SK-N-SH (cell line): ENCODE measurements at regions of chr13 and their contacts with region 1.

Region 1: DNA sequence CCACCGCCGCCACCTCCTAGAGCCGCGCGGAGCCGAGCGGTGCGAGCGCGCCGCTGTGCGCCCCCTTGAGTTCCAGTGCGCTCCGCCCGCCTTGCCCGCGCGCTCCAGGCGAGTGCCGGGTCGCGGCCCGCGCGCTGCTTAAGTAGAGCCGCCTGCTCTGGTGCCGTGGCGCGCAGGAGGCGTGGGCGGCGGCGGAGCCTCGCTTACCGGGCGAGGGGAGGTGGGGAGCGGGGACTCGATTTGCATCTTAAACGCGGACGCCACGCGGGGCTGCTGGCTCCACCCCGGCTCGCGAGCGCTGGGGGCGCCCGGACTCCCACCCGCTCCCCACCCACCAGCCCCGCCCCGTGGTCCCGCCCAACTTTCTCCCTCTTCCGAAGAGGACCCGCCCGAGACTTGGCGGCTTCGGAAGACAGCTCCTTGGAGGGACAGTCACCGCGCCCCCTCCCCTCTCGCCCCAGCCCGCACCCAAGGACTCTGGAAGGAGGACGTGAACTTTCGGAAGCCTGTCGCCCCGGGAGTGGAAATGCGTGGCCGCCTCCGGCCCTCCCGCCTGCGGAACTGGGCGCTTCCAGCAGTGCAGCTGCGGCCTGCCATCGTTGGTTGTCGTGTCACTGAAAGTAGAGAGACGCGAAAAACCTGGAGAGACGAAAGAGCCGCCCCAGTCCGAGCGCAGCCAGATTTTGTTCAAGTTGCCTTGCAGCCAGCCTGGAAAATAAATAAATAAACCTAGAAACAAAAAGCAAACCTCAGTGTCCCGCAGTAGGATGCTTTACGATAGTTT is at the start of gene KCTD12:
- DNase-seq: peak; percentile 86
- H3K4me3 ChIP-seq: peak within 1 kb of the TSS; percentile 67 to 70
- H3K27ac ChIP-seq: peak within 1 kb of the TSS; percentile 36 to 58; a peak in 3 of 4 replicates
- H3K4me1 ChIP-seq: peaks cover 0 to 13% of the 10 kb centered on the region in 2 experiments; a peak in 2 of 4 replicates
- H3K27me3 ChIP-seq: no peaks in the 10 kb centered on the region
- CTCF ChIP-seq: 0 out of 2 replicates have a peak, but pooled peaks have one; percentile 14
- EP300 ChIP-seq: no peak
- RAD21 ChIP-seq: peak; percentile 33; the same call in 1 of the 2 replicates
- polyA plus RNA-seq, gene KCTD12: 0.93 and 1.0 TPM in 2 replicates

Region 2: GRCh38 chr13:76667551-76667950 is 218.9 kb before region 1 on chr13:
- CTCF ChIA-PET with region 1: interaction called, 24 read pairs
- POLR2A ChIA-PET with region 1: no interaction called
- DNase-seq: peak; percentile 4
- H3K4me3 ChIP-seq: no peak overlapping the region
- H3K27ac ChIP-seq: no peak overlapping the region
- H3K4me1 ChIP-seq: no peaks in the 10 kb centered on the region
- H3K27me3 ChIP-seq: no peaks in the 10 kb centered on the region
- CTCF ChIP-seq: peak; percentile 73
- EP300 ChIP-seq: no peak
- RAD21 ChIP-seq: peak; percentile 73

Region 3: DNA sequence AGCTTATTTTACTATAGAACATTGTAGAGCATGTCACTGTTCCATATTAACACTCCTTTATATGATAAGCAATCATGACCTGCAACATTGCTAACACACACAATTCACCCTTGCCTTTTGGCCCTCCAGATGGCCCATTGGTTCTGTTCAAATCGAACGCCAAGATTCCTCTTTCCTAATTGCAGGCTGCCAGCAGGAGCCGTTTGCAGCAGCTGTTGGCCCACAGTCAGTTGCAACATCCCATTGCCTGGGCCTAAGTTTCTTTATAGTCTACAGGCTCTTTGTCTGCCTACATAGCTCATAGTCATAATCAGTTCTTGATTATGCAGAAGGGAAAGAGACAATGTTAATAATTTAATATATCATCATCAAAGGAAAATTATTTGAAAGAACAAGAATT is 37.9 kb before region 1 on chr13:
- CTCF ChIA-PET with region 1: interaction called, 11 read pairs
- POLR2A ChIA-PET with region 1: interaction called, 3 read pairs
- DNase-seq: no peak
- H3K4me3 ChIP-seq: no peak overlapping the region
- H3K27ac ChIP-seq: no peak overlapping the region; a peak in 1 of 4 replicates
- H3K4me1 ChIP-seq: peaks cover 0 to 10% of the 10 kb centered on the region in 2 experiments; a peak in 3 of 4 replicates
- H3K27me3 ChIP-seq: no peaks in the 10 kb centered on the region
- CTCF ChIP-seq: no peak
- EP300 ChIP-seq: peak in 1 of 2 experiments; percentile 37; a peak in 1 of 4 replicates
- RAD21 ChIP-seq: no peak

Region 4: GRCh38 chr13:76874479-76874878 is 12.0 kb before region 1 on chr13:
- CTCF ChIA-PET with region 1: interaction called, 14 read pairs
- POLR2A ChIA-PET with region 1: no interaction called
- DNase-seq: no peak
- H3K4me3 ChIP-seq: no peak overlapping the region
- H3K27ac ChIP-seq: no peak overlapping the region
- H3K4me1 ChIP-seq: peaks cover 3 to 5% of the 10 kb centered on the region in 2 experiments; a peak in 2 of 4 replicates
- H3K27me3 ChIP-seq: no peaks in the 10 kb centered on the region
- CTCF ChIP-seq: no peak
- EP300 ChIP-seq: no peak
- RAD21 ChIP-seq: no peak

Region 5: GRCh38 chr13:77056382-77056781 is 169.9 kb after region 1 on chr13:
- CTCF ChIA-PET with region 1: no interaction called
- POLR2A ChIA-PET with region 1: no interaction called
- DNase-seq: no peak
- H3K4me3 ChIP-seq: no peak overlapping the region
- H3K27ac ChIP-seq: no peak overlapping the region
- H3K4me1 ChIP-seq: no peaks in the 10 kb centered on the region; a peak in 2 of 4 replicates
- H3K27me3 ChIP-seq: no peaks in the 10 kb centered on the region
- CTCF ChIP-seq: no peak
- EP300 ChIP-seq: no peak
- RAD21 ChIP-seq: no peak

Region 6: GRCh38 chr13:77397636-77398035 is 511.2 kb after region 1 on chr13:
- CTCF ChIA-PET with region 1: no interaction called
- POLR2A ChIA-PET with region 1: no interaction called
- DNase-seq: no peak
- H3K4me3 ChIP-seq: no peak overlapping the region
- H3K27ac ChIP-seq: peak overlapping the region in 1 of 2 experiments; percentile 51; a peak in 1 of 4 replicates
- H3K4me1 ChIP-seq: no peaks in the 10 kb centered on the region
- H3K27me3 ChIP-seq: no peaks in the 10 kb centered on the region
- CTCF ChIP-seq: no peak
- EP300 ChIP-seq: no peak
- RAD21 ChIP-seq: no peak